Activated CD4-positive, alpha-beta T cell treated with anti-CD3 and anti-CD28 coated beads for 36 hours (primary cell): ENCODE measurements at regions of chr3 and their contacts with region 1.

Region 1: DNA sequence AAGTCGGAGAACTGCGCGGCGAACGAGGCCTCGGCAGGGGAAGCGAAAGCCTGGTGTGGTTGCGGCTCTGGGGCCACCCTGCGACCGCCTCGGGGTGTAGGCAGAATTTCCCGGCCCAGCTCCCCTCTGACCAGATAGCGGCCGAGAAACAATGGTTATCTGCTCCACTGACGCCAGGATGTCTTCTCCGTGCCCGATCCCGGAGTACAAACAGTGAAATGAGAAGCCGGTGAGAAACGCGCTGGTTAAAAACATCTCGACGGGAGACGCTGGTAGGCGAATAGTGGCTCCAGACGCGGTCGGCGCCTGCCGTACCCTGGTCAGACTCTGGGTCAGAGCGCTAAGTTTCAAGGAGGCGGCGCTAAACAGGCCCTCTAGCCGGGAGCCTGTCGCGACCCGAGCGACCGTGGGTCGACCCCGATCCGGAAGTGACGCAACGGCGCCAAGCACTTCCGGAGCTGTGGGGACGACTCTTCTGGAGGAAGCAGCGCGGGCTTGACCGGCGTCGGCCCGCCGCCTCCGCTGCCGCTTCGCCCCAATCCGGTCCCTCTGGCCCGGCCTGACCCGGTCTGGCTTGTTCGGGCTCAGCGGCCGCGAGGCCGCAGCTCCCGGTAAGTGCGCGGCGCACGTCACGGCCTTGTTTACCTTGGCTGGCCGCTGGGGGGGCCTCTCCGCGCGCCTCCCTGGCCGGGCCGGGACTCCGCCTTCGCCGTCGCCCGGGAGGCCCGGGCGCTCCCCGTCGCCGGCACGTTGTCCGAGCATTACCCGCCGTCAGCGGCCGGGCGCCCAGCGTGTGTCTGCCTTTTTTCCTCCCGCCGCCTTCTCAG is at the start of gene ARIH2:
- DNase-seq: peak; percentile 94
- ATAC-seq: peak; percentile 75
- H3K4me3 Mint-ChIP-seq: peak within 1 kb of the TSS; percentile 90
- H3K27ac Mint-ChIP-seq: peak within 1 kb of the TSS; percentile 100
- H3K4me1 Mint-ChIP-seq: peaks cover 30% of the 10 kb centered on the region
- H3K27me3 Mint-ChIP-seq: no peaks in the 10 kb centered on the region
- total RNA-seq, gene ARIH2: 105 to 112 TPM

Region 2: DNA sequence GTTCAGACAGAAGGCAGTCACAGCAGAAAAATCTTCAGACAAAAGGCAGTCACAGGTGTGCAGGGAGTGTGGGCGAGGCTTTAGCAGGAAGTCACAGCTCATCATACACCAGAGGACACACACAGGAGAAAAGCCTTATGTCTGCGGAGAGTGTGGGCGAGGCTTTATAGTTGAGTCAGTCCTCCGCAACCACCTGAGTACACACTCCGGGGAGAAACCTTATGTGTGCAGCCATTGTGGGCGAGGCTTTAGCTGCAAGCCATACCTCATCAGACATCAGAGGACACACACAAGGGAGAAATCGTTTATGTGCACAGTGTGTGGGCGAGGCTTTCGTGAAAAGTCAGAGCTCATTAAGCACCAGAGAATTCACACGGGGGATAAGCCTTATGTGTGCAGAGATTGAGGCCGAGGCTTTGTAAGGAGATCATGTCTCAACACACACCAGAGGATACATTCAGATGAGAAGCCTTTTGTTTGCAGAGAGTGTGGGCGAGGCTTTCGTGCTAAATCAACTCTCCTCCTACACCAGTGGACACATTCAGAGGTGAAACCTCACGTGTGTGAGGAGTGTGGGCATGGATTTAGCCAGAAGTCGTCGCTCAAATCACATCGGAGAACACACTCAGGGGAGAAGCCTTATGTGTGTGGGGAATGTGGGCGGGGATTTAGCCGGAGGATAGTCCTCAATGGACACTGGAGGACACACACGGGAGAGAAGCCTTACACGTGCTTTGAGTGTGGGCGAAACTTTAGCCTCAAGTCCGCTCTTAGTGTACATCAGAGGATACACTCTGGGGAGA is 650.0 kb before region 1 on chr3:
- CTCF ChIA-PET with region 1: no interaction called
- POLR2A ChIA-PET with region 1: no interaction called
- intact Hi-C with region 1: loop called in 1 of 2 experiments (anchors 1 kb)
- DNase-seq: peak; percentile 95
- ATAC-seq: peak; percentile 91
- H3K4me3 Mint-ChIP-seq: peak overlapping the region; percentile 57
- H3K27ac Mint-ChIP-seq: peak overlapping the region; percentile 92
- H3K4me1 Mint-ChIP-seq: peaks cover 39% of the 10 kb centered on the region
- H3K27me3 Mint-ChIP-seq: no peaks in the 10 kb centered on the region

Region 3: DNA sequence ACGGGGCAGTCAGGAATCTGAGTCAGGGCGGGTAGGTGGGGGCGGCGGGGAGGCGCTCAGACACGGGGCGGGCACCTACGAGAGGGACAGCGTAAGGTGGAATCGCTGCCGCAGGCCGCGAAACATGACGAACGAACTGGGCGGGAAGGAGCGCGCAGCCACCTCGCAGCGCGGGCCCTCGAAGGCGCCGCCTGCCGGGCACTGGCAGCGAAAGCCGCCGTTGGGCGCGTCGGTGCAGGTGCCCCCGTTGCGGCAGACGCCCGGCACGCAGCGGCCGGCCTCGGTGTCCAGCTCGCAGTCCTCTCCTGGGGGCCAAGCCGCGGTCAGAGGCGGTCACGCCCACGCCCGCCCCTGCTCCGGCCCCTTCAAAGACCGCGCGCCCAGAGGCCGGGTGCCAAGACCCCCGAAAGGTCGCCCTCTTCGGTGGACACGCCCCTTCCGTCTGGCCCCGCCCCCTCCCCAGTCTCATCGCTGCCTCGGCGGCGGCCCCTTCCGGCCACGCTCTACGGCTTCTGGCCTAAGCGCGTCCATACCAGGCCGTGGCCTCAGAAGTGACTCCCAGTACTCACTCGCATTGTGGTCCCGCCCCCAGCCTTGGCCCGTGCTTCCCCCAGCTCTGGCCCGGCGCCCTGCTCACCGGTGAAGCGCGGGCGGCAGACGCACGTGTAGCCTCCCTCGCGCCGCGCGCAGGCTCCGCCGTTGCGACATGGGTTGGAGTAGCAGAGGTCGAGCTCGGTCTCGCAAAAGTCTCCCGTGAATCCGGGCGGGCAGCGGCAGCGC is 262.4 kb before region 1 on chr3:
- CTCF ChIA-PET with region 1: no interaction called
- POLR2A ChIA-PET with region 1: no interaction called
- intact Hi-C with region 1: loop called in 1 of 2 experiments (anchors 1 kb)
- DNase-seq: peak; percentile 94
- ATAC-seq: peak; percentile 83
- H3K4me3 Mint-ChIP-seq: peak overlapping the region; percentile 71
- H3K27ac Mint-ChIP-seq: peak overlapping the region; percentile 87
- H3K4me1 Mint-ChIP-seq: peaks cover 6% of the 10 kb centered on the region
- H3K27me3 Mint-ChIP-seq: peaks cover 16% of the 10 kb centered on the region

Region 4: DNA sequence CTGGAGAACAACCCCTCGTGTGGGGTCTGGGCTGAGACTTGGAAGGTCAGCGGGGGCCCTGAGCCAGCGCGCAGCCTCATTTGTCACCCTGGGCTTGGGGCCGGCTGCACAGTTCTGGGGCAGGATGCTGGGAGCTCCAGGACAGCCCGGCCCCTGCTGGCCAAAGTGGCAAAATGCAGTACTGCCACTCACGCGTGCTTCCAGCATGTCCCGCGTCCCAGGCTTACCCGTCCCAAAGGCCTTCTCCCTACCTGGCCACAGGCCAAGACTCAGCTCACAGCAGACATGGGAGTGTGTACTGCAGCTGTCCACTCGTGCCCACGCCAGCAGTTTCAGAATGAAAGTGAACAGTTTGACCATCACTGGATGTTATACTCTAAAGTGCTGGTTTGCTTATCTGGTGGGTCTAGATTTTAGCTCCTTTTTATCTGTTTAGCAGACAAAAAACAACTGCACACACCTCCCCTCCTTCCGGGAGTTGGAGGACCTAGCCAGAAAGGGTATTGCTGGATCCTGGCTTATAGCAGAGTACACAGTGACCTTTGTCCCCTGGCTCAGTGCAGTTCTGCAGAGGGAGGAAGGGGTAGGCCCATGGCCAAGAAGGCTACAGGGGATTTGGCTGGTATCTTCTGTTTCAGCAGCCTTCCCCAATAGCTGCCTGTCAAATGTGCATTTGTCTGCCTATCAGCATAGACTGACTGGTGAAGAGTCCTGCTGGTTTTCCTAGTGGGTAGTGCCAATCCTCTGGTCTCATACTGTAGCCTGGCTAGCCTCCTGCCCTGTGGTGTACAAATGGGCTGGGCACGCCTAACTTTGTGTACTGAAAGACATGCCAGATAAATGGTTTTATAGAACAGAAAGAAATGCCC is 178.4 kb before region 1 on chr3:
- CTCF ChIA-PET with region 1: no interaction called
- POLR2A ChIA-PET with region 1: no interaction called
- intact Hi-C with region 1: no loop called
- DNase-seq: peak; percentile 76
- ATAC-seq: peak; percentile 92
- H3K4me3 Mint-ChIP-seq: no peak overlapping the region
- H3K27ac Mint-ChIP-seq: no peak overlapping the region
- H3K4me1 Mint-ChIP-seq: no peaks in the 10 kb centered on the region
- H3K27me3 Mint-ChIP-seq: no peaks in the 10 kb centered on the region

Region 5: GRCh38 chr3:48898383-48899234 is 20.0 kb before region 1 on chr3 and contains the start of gene SLC25A20:
- CTCF ChIA-PET with region 1: interaction called, 5 read pairs
- POLR2A ChIA-PET with region 1: interaction called, 18 read pairs
- intact Hi-C with region 1: loop called (anchors 1 kb)
- DNase-seq: peak; percentile 96
- ATAC-seq: peak; percentile 96
- H3K4me3 Mint-ChIP-seq: peak within 1 kb of the TSS; percentile 90
- H3K27ac Mint-ChIP-seq: peak within 1 kb of the TSS; percentile 92
- H3K4me1 Mint-ChIP-seq: peaks cover 30% of the 10 kb centered on the region
- H3K27me3 Mint-ChIP-seq: no peaks in the 10 kb centered on the region
- total RNA-seq, gene SLC25A20: 15.8 to 18.5 TPM

Region 6: GRCh38 chr3:49028673-49029562 is 110.3 kb after region 1 on chr3 and contains the start of gene IMPDH2:
- CTCF ChIA-PET with region 1: no interaction called
- POLR2A ChIA-PET with region 1: interaction called, 4 read pairs
- intact Hi-C with region 1: loop called in 1 of 2 experiments (anchors 2 kb)
- DNase-seq: peak; percentile 96
- ATAC-seq: peak; percentile 93
- H3K4me3 Mint-ChIP-seq: peak within 1 kb of the TSS; percentile 89
- H3K27ac Mint-ChIP-seq: peak within 1 kb of the TSS; percentile 97
- H3K4me1 Mint-ChIP-seq: peaks cover 53% of the 10 kb centered on the region
- H3K27me3 Mint-ChIP-seq: no peaks in the 10 kb centered on the region
- total RNA-seq, gene IMPDH2: 504 to 515 TPM

Region 7: DNA sequence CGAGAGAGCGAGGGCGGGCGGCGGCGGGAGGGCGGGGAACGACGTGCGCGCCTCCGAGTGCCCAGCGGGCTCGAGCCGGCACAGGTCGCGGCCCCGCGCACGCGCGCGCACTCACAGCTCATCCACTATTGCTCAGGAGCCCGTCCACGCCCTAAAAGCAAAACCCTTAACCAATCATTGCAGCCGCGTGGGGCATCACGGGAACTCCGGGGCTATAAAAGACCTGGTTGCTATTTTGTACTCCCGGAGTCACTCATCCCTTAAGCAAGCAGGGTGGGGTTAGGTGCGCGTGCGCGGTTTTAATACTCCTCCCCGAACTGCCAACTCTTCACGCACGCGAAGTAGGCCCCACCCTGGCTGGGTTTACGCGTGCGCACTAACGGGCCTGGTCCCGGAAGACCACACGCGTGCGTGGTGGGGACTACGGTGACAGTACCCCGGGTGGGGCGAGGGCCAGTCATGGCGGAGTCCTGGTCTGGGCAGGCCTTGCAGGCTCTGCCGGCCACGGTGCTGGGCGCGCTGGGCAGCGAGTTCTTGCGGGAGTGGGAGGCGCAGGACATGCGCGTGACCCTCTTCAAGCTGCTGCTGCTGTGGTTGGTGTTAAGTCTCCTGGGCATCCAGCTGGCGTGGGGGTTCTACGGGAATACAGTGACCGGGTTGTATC is 493.5 kb after region 1 on chr3 and contains the starts of genes RHOA and TCTA:
- CTCF ChIA-PET with region 1: no interaction called
- POLR2A ChIA-PET with region 1: interaction called, 4 read pairs
- intact Hi-C with region 1: loop called in 1 of 2 experiments (anchors 5 kb)
- DNase-seq: peak; percentile 99
- ATAC-seq: peak; percentile 88
- H3K4me3 Mint-ChIP-seq: peak within 1 kb of the TSS; percentile 97
- H3K27ac Mint-ChIP-seq: peak within 1 kb of the TSS; percentile 97
- H3K4me1 Mint-ChIP-seq: peaks cover 63% of the 10 kb centered on the region
- H3K27me3 Mint-ChIP-seq: no peaks in the 10 kb centered on the region
- total RNA-seq, gene RHOA: 438 to 449 TPM
- total RNA-seq, gene TCTA: 9.4 TPM